ENCODE measurements at regions of chr6 and their contacts with region 1.

Region 1: DNA sequence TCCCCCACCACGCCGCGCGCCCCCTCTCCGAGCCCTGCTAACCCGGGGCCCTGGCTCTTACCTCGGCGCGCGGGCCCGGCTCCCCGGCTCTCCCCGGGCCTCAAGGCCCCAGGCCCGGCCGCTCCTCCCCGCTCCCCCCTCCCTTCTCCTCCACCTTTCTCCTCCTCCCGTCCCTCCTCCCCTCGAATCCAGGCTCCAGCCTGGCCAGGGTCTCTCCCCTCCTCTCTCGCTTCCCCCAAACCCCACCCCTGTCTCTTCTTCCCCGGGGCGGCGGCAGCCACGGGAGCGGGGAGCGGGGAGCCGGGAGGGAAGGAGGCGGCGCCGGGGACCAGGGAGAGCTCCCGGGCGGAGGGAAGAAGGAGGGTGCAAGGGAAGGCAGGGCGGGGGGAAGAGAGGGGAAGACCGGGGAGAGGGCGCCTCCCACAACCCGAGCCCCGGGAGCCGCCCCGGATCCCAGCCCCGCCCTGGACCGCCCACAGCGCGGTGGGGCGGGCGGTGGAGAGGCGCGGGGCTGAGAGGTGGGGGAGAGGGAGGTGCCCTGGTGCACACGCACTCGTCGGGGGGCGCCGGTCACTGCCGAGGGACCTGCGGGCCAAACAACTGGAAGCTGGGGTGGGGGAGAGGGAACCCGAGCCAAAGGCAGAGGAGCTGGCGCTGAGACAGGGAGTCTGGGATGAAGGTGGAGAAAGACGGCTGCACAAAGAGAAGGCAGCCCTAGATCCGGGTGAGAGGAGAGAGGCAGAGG is at the start of gene GABBR1:
- DNase-seq: no peak
- ATAC-seq: peak; percentile 93
- H3K4me3 ChIP-seq: peak within 1 kb of the TSS; percentile 56 to 63
- H3K27ac ChIP-seq: no peak within 1 kb of the TSS
- H3K4me1 ChIP-seq: no peaks in the 10 kb centered on the region
- H3K27me3 ChIP-seq: peaks cover 19% of the 10 kb centered on the region
- CTCF ChIP-seq: no peak
- total RNA-seq, gene GABBR1: 11.9 TPM

Region 2: GRCh38 chr6:29649701-29650673 is 17.0 kb after region 1 on chr6:
- CTCF ChIA-PET with region 1: interaction called, 20 read pairs
- POLR2A ChIA-PET with region 1: no interaction called
- in situ Hi-C with region 1: no loop called
- intact Hi-C with region 1: no loop called
- DNase-seq: peak; percentile 90
- ATAC-seq: peak; percentile 98
- H3K4me3 ChIP-seq: peak overlapping the region; percentile 47 to 78
- H3K27ac ChIP-seq: peak overlapping the region; percentile 77; the same call in 1 of the 2 replicates
- H3K4me1 ChIP-seq: peaks cover 3% of the 10 kb centered on the region
- H3K27me3 ChIP-seq: no peaks in the 10 kb centered on the region
- CTCF ChIP-seq: peak; percentile 96

Region 3: DNA sequence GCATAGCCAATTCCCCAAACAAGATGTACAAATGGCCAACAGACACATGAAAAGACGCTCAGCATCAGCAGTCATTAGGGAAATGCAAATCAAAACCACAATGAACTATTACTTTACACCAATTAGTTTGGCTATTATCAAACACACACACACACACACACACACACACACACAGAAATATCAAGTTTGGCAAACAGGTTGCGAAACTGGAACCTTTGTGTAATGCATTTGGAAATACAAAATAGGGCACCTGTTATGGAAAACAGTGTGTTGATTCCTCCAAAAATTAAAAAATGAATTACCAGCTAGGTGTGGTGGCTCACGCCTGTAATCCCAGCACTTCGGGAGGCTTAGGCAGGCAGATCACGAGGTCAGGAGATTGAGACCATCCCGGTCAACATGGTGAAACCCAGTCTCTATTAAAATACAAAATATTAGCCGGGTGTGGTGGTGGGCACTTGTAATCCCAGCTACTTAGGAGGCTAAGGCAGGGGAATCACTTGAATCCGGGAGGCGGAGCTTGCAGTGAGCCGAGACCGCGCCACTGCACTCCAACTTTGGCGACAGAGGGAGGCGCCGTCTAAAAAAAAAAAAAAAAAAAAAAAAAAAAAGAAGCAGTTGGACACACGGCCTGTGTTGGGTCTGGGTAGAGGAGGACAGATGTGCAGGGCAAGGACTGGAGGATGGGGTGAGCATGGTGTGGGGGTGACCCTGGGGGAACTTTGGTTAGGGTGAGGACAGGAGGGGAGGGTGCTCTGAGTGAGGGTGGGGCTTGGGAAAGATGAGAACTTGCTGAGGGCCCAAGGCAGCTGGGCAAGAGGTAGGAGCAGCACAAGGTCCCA is 114.1 kb after region 1 on chr6:
- CTCF ChIA-PET with region 1: interaction called, 11 read pairs
- POLR2A ChIA-PET with region 1: no interaction called
- in situ Hi-C with region 1: no loop called
- intact Hi-C with region 1: no loop called
- DNase-seq: no peak
- ATAC-seq: no peak
- H3K4me3 ChIP-seq: no peak overlapping the region
- H3K27ac ChIP-seq: no peak overlapping the region
- H3K4me1 ChIP-seq: no peaks in the 10 kb centered on the region
- H3K27me3 ChIP-seq: no peaks in the 10 kb centered on the region; the same call in 1 of the 2 replicates
- CTCF ChIP-seq: no peak

Region 4: DNA sequence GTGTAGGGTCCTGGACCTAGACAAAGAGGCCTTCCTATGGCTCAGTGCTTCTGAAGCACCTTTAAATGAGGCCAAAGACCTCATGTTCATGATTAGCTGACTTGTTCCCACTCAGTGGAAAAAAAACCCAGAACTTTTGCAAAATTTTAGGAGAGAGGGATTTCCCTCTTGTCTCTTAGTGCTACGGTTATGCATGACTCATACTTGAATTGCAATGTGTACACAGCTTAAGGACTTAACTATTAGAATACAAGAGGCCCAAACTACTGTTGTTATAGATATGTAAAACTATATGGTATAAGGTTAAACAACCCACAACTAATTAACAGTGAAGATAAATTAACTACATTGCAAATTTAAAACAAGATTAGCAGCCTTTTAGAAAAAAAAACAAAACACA is 277.0 kb after region 1 on chr6:
- CTCF ChIA-PET with region 1: no interaction called
- POLR2A ChIA-PET with region 1: interaction called, 14 read pairs
- in situ Hi-C with region 1: no loop called
- intact Hi-C with region 1: no loop called
- DNase-seq: no peak
- ATAC-seq: no peak
- H3K4me3 ChIP-seq: no peak overlapping the region
- H3K27ac ChIP-seq: no peak overlapping the region
- H3K4me1 ChIP-seq: no peaks in the 10 kb centered on the region
- H3K27me3 ChIP-seq: no peaks in the 10 kb centered on the region
- CTCF ChIP-seq: no peak